ENCODE measurements at regions of chr17 and their contacts with region 1.

Region 1: DNA sequence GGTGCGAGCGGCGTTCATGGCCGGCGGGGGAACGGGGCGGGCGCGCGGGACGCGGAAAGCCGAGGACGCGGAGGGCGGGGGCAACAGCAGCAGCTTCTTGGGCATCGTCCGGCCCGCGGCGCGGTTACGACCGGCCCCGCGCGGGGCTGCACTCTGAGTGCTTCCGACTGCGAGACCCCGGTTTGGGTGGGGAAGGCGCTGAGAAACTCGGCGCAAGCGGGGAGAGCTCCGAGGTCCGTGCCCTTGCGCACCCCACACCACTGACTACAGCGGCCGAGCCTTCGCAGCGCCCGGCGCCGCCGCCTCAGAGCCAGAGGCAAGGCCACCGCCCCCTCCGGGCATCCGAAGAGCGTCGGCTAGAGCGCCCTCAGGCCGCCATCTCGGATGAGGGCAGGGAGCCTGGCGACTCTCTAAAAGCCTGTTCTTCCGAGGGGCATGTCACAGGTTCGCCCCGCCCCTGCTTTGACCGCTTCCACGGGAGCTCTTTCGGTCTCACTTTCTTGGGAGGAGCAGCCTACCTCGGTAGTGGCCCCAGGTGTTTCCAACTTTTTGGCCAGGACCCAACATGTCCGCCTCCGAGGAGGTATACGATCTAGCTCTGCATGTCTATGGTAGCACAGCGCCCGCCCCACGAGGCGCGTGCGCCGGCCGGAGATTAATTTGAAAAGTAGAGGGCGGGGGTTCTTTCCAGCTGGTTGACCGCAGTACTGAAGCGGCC is at the start of gene PRPSAP1:
- DNase-seq: peak; percentile 81 to 89
- ATAC-seq: peak; percentile 93 to 98 (median 94)
- H3K4me3 ChIP-seq: peak within 1 kb of the TSS; percentile 64
- H3K4me3 Mint-ChIP-seq: peak within 1 kb of the TSS; percentile 98
- H3K27ac ChIP-seq: peak within 1 kb of the TSS; percentile 95
- H3K27ac Mint-ChIP-seq: peak within 1 kb of the TSS; percentile 94 to 97
- H3K4me1 ChIP-seq: peaks cover 15% of the 10 kb centered on the region
- H3K4me1 Mint-ChIP-seq: peaks cover 24 to 27% of the 10 kb centered on the region in 2 donors
- H3K27me3 ChIP-seq: no peaks in the 10 kb centered on the region
- H3K27me3 Mint-ChIP-seq: no peaks in the 10 kb centered on the region
- CTCF ChIP-seq: peak; percentile 39
- total RNA-seq, gene PRPSAP1: 32.9 to 45.2 (median 41.5) TPM

Region 2: GRCh38 chr17:76314392-76315227 is 39.1 kb before region 1 on chr17:
- intact Hi-C with region 1: no loop called
- DNase-seq: no peak
- ATAC-seq: no peak
- H3K4me3 ChIP-seq: no peak overlapping the region
- H3K4me3 Mint-ChIP-seq: no peak overlapping the region
- H3K27ac ChIP-seq: no peak overlapping the region
- H3K27ac Mint-ChIP-seq: no peak overlapping the region
- H3K4me1 ChIP-seq: no peaks in the 10 kb centered on the region
- H3K4me1 Mint-ChIP-seq: peaks cover 0 to 6% of the 10 kb centered on the region in 2 donors
- H3K27me3 ChIP-seq: no peaks in the 10 kb centered on the region
- H3K27me3 Mint-ChIP-seq: no peaks in the 10 kb centered on the region
- CTCF ChIP-seq: no peak

Region 3: GRCh38 chr17:76385892-76386721 is 32.3 kb after region 1 on chr17:
- intact Hi-C with region 1: loop called (anchors 1 kb)
- DNase-seq: peak; percentile 82 to 92
- ATAC-seq: peak; percentile 50 to 64 (median 52)
- H3K4me3 ChIP-seq: peak overlapping the region; percentile 43
- H3K4me3 Mint-ChIP-seq: peak overlapping the region; percentile 79
- H3K27ac ChIP-seq: no peak overlapping the region
- H3K27ac Mint-ChIP-seq: peak overlapping the region in 1 of 2 donors; percentile 60
- H3K4me1 ChIP-seq: peaks cover 35% of the 10 kb centered on the region
- H3K4me1 Mint-ChIP-seq: peaks cover 5 to 17% of the 10 kb centered on the region in 2 donors
- H3K27me3 ChIP-seq: peaks cover 5% of the 10 kb centered on the region
- H3K27me3 Mint-ChIP-seq: no peaks in the 10 kb centered on the region
- CTCF ChIP-seq: peak; percentile 92

Region 4: DNA sequence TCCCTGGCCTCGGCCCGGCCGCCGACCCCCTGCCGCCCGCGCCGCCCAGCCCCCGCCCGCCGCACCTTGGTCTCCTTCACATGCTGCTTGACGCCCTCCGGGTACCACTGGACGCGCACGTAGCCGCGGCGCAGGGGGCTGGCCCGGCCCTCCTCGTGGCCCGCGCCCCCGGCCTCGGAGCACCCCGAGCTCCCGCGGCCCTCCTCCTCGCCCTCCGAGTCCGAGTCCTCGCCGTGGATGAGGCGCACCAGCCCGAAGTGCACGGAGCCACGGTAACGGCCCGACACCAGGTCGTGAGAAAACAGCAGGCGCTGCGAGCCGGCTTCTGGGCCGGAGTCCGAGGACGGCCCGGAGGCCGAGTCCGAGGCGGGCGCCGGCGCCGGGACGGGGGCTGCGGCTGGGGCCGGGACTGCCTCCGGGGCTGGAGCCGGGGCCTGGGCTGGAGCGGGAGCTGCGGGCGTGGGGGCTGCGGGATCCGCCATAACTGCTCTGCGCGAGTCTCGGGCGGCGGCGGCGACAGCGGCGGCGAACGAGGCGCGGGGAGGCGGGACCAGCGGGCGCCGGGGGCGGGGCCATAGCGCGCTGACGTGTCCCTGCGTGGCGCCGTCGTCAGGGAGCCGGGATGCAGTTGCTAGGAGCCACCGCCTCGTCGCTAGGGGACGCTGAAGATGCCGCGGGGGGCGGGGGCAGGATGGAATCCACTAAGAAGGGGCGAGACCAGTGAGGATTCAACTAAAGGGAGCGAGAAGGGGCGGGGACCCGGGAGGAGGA is 99.1 kb after region 1 on chr17 and contains the start of gene UBE2O:
- intact Hi-C with region 1: loop called (anchors 5 kb)
- DNase-seq: peak; percentile 95 to 96
- ATAC-seq: peak; percentile 96 to 98 (median 96)
- H3K4me3 ChIP-seq: peak within 1 kb of the TSS; percentile 45
- H3K4me3 Mint-ChIP-seq: peak within 1 kb of the TSS; percentile 85
- H3K27ac ChIP-seq: peak within 1 kb of the TSS; percentile 39
- H3K27ac Mint-ChIP-seq: peak within 1 kb of the TSS; percentile 89 to 90
- H3K4me1 ChIP-seq: peaks cover 19% of the 10 kb centered on the region
- H3K4me1 Mint-ChIP-seq: peaks cover 30 to 31% of the 10 kb centered on the region in 2 donors
- H3K27me3 ChIP-seq: no peaks in the 10 kb centered on the region
- H3K27me3 Mint-ChIP-seq: no peaks in the 10 kb centered on the region
- CTCF ChIP-seq: peak; percentile 62
- total RNA-seq, gene UBE2O: 34.9 to 40.2 (median 37.7) TPM

Region 5: GRCh38 chr17:76671123-76671911 is 317.6 kb after region 1 on chr17:
- intact Hi-C with region 1: loop called (anchors 1 kb)
- DNase-seq: peak; percentile 97 to 100
- ATAC-seq: peak; percentile 98 to 100 (median 99)
- H3K4me3 ChIP-seq: peak overlapping the region; percentile 81
- H3K4me3 Mint-ChIP-seq: peak overlapping the region; percentile 87
- H3K27ac ChIP-seq: peak overlapping the region; percentile 89
- H3K27ac Mint-ChIP-seq: peak overlapping the region; percentile 91 to 97
- H3K4me1 ChIP-seq: peaks cover 17% of the 10 kb centered on the region
- H3K4me1 Mint-ChIP-seq: peaks cover 23 to 26% of the 10 kb centered on the region in 2 donors
- H3K27me3 ChIP-seq: no peaks in the 10 kb centered on the region
- H3K27me3 Mint-ChIP-seq: no peaks in the 10 kb centered on the region
- CTCF ChIP-seq: no peak

Measured in natural killer cell (primary cell).